Mammary epithelial cell (primary cell): ENCODE measurements at regions of chr16 and their contacts with region 1.

Region 1: GRCh38 chr16:2422123-2422867 is 7.0 kb upstream of the CCNF start:
- DNase-seq: no peak
- H3K4me3 ChIP-seq: no peak overlapping the region
- H3K27ac ChIP-seq: no peak overlapping the region
- H3K4me1 ChIP-seq: no peaks in the 10 kb centered on the region
- H3K27me3 ChIP-seq: no peaks in the 10 kb centered on the region
- CTCF ChIP-seq: no peak

Region 2: GRCh38 chr16:2365397-2366294 is 56.6 kb before region 1 on chr16:
- CTCF ChIA-PET with region 1: no interaction called
- dilution Hi-C with region 1: no loop called
- in situ Hi-C with region 1: no loop called
- intact Hi-C with region 1: loop called (anchors 5 kb)
- DNase-seq: peak; percentile 67
- H3K4me3 ChIP-seq: no peak overlapping the region
- H3K27ac ChIP-seq: no peak overlapping the region
- H3K4me1 ChIP-seq: peaks cover 24% of the 10 kb centered on the region
- H3K27me3 ChIP-seq: no peaks in the 10 kb centered on the region
- CTCF ChIP-seq: no peak

Region 3: DNA sequence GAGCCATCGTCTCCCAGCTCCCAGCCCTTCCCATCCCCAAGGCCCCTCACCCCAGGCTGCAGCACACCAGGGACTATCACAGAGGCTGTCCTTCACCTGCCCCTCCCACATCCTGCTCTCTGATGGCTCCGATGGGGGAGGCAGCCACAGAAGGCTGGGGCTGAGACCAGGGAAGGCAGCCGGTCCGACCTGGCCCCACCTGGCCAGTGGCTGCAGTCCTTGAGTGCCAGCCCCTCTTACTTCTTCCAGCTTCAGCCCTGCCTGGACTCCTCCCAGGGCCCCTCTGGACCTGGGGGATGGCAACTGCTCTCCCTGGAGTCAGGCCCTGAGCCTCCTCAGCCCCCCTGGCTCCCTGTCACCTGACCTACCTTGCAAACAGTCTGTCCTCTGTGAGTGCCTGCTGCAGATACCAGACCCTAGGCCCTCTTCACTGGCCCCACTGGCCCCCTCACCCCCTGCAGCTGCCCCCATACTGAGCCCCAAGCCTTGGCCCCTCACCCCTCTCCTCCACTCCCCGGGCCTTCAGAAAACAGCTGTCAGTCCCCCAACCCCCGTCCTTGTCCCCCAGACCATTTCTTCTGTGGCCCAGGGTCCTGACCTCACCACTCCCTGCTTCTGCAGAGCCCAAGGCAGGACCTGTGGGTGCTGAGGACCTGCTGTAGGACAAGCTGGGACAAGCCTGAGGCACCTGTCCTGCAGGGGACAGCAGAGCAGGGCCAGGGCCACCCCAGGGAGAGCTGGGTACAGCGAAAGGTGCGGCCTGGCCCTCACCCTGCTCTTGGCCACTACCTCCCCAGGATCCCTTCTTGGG is 317.5 kb after region 1 on chr16:
- CTCF ChIA-PET with region 1: no interaction called
- dilution Hi-C with region 1: no loop called
- in situ Hi-C with region 1: no loop called
- intact Hi-C with region 1: no loop called
- DNase-seq: no peak
- H3K4me3 ChIP-seq: no peak overlapping the region
- H3K27ac ChIP-seq: no peak overlapping the region
- H3K4me1 ChIP-seq: peaks cover 8% of the 10 kb centered on the region
- H3K27me3 ChIP-seq: no peaks in the 10 kb centered on the region
- CTCF ChIP-seq: no peak